ENCODE measurements at regions of chr1 and their contacts with region 1.

Region 1: GRCh38 chr1:245060684-245061374 is 94.0 kb upstream of the KIF26B start:
- DNase-seq: peak; percentile 95
- ATAC-seq: peak; percentile 96
- H3K4me3 ChIP-seq: peak overlapping the region in 1 of 3 experiments; percentile 9; a peak in 1 of 6 replicates
- H3K27ac ChIP-seq: peak overlapping the region; percentile 94
- H3K4me1 ChIP-seq: peaks cover 45% of the 10 kb centered on the region
- H3K27me3 ChIP-seq: no peaks in the 10 kb centered on the region
- CTCF ChIP-seq: no peak
- EP300 ChIP-seq: peak; percentile 63 to 90
- POLR2A ChIP-seq: no peak
- RAD21 ChIP-seq: no peak

Region 2: GRCh38 chr1:244779410-244779809 is 281.4 kb before region 1 on chr1:
- CTCF ChIA-PET with region 1: no interaction called
- POLR2A ChIA-PET with region 1: no interaction called
- in situ Hi-C with region 1: no loop called
- intact Hi-C with region 1: no loop called
- DNase-seq: no peak
- ATAC-seq: no peak
- H3K4me3 ChIP-seq: no peak overlapping the region
- H3K27ac ChIP-seq: no peak overlapping the region
- H3K4me1 ChIP-seq: no peaks in the 10 kb centered on the region
- H3K27me3 ChIP-seq: peaks cover 2 to 22% of the 10 kb centered on the region in 2 experiments; a peak in 3 of 5 replicates
- CTCF ChIP-seq: no peak
- EP300 ChIP-seq: no peak
- POLR2A ChIP-seq: no peak
- RAD21 ChIP-seq: no peak

Region 3: DNA sequence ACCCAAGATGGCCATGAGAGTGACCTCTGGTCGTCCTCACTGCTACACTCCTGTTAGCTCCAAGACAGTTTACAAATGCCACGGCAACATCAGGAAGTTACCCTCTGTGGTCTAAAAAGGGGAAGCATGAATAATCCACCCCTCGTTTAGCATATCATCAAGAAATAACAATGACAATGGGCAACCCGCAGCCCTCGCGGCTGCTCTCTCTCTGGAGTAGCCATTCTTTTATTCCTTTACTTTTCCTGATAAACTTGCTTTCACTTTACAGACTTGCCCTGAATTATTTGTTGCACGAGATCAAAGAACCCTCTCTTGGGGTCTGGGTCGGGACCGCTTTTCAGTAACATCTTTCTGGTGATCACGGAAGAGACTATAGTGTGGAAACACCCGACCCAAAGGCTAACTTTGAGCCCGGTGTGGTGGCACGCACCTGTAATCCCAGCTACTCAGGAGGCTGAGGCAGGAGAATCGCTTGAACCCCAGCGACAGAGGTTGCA is 245.2 kb before region 1 on chr1:
- CTCF ChIA-PET with region 1: no interaction called
- POLR2A ChIA-PET with region 1: no interaction called
- in situ Hi-C with region 1: no loop called
- intact Hi-C with region 1: no loop called
- DNase-seq: no peak
- ATAC-seq: no peak
- H3K4me3 ChIP-seq: no peak overlapping the region
- H3K27ac ChIP-seq: no peak overlapping the region
- H3K4me1 ChIP-seq: peaks cover 23% of the 10 kb centered on the region
- H3K27me3 ChIP-seq: no peaks in the 10 kb centered on the region
- CTCF ChIP-seq: no peak
- EP300 ChIP-seq: no peak
- POLR2A ChIP-seq: no peak
- RAD21 ChIP-seq: no peak

Region 4: DNA sequence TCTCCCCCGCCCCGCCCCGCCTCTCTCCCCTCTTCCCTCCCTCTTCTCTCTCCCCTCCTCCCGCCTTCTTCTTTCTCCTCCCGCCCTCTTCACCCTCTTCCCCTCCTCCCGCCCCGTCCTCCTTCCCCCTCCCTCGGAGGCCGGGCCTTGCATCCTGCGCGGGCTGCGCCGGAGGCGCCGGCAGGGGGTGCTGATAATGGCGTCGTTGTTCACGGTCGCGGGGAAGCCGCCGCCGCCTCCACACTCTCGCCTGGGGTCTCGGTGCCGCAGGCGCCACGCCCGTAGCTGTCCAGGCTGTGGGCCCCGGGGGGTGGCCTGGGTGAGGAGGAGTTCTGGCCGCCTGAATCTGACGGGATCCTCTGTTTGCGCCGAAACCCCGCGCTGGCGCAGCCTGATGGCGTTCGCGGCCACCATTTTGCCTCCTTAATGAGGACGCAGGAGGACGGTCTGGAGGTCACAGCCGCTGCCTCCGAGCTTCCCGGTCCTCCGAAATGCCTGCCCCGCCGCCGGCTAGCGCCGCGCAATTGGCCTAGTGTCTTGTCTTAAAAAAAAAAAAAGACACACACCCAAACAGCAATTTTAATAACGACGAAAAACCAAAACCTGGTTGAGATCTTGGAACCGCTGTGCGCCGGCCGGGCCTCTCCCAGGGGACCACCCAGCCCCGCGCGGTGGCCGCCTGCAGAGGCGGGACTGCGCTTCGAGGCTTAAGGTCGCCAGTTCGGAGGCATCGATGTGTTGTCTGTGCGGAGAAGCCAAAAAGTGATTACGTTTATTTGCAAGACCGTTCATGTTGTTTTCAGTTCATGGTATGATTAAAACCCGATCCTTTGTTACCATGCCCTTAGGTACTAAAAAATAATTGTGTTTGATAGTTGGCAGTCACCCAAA is 89.9 kb before region 1 on chr1:
- CTCF ChIA-PET with region 1: no interaction called
- POLR2A ChIA-PET with region 1: interaction called, 7 read pairs
- in situ Hi-C with region 1: no loop called
- intact Hi-C with region 1: loop called (anchors 1 kb)
- DNase-seq: peak; percentile 91
- ATAC-seq: peak; percentile 79
- H3K4me3 ChIP-seq: peak overlapping the region; percentile 66 to 80 (median 75)
- H3K27ac ChIP-seq: peak overlapping the region; percentile 98
- H3K4me1 ChIP-seq: peaks cover 25% of the 10 kb centered on the region
- H3K27me3 ChIP-seq: no peaks in the 10 kb centered on the region; a peak in 1 of 5 replicates
- CTCF ChIP-seq: peak; percentile 82
- EP300 ChIP-seq: no peak; a peak in 2 of 4 replicates
- POLR2A ChIP-seq: peak; percentile 68 to 87; a peak in 3 of 4 replicates
- RAD21 ChIP-seq: peak; percentile 73

Region 5: GRCh38 chr1:245079021-245079609 is 18.3 kb after region 1 on chr1:
- CTCF ChIA-PET with region 1: no interaction called
- POLR2A ChIA-PET with region 1: no interaction called
- in situ Hi-C with region 1: no loop called
- intact Hi-C with region 1: loop called (anchors 1 kb)
- DNase-seq: peak; percentile 29
- ATAC-seq: no peak
- H3K4me3 ChIP-seq: no peak overlapping the region
- H3K27ac ChIP-seq: no peak overlapping the region
- H3K4me1 ChIP-seq: no peaks in the 10 kb centered on the region
- H3K27me3 ChIP-seq: no peaks in the 10 kb centered on the region
- CTCF ChIP-seq: peak; percentile 72
- EP300 ChIP-seq: no peak
- POLR2A ChIP-seq: no peak
- RAD21 ChIP-seq: peak; percentile 63

Region 6: GRCh38 chr1:245197911-245198379 is 137.1 kb after region 1 on chr1:
- CTCF ChIA-PET with region 1: no interaction called
- POLR2A ChIA-PET with region 1: no interaction called
- in situ Hi-C with region 1: no loop called
- intact Hi-C with region 1: no loop called
- DNase-seq: no peak
- ATAC-seq: no peak
- H3K4me3 ChIP-seq: no peak overlapping the region
- H3K27ac ChIP-seq: no peak overlapping the region
- H3K4me1 ChIP-seq: no peaks in the 10 kb centered on the region
- H3K27me3 ChIP-seq: no peaks in the 10 kb centered on the region; a peak in 1 of 5 replicates
- CTCF ChIP-seq: no peak
- EP300 ChIP-seq: no peak
- POLR2A ChIP-seq: no peak
- RAD21 ChIP-seq: no peak

Region 7: DNA sequence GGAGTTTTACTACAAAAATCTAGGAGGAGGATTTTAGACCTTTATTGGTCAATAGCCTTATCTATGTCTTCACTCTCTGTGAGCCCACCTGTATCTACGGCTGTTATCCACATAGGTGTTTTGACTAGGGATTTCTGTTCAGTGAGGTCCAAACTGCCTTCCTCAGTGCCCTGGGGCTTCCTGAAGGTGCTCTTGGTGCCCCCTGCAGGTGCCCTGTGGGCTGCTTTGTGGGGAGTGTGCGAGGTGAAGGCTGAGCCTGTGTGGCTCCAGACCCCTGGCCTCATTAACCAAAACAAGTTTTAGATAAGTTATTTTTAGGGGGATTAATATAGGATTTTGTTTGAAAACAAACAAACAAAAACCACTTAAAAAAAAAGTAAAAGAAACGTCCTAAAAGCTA is 216.4 kb after region 1 on chr1:
- CTCF ChIA-PET with region 1: no interaction called
- POLR2A ChIA-PET with region 1: no interaction called
- in situ Hi-C with region 1: no loop called
- intact Hi-C with region 1: no loop called
- DNase-seq: peak; percentile 27
- ATAC-seq: peak; percentile 98
- H3K4me3 ChIP-seq: no peak overlapping the region
- H3K27ac ChIP-seq: no peak overlapping the region
- H3K4me1 ChIP-seq: peaks cover 10% of the 10 kb centered on the region; the same call in 1 of the 2 replicates
- H3K27me3 ChIP-seq: no peaks in the 10 kb centered on the region
- CTCF ChIP-seq: peak; percentile 77
- EP300 ChIP-seq: no peak
- POLR2A ChIP-seq: no peak
- RAD21 ChIP-seq: peak; percentile 43